Caco-2 (cell line): ENCODE measurements at regions of chr2 and their contacts with region 1.

Region 1: DNA sequence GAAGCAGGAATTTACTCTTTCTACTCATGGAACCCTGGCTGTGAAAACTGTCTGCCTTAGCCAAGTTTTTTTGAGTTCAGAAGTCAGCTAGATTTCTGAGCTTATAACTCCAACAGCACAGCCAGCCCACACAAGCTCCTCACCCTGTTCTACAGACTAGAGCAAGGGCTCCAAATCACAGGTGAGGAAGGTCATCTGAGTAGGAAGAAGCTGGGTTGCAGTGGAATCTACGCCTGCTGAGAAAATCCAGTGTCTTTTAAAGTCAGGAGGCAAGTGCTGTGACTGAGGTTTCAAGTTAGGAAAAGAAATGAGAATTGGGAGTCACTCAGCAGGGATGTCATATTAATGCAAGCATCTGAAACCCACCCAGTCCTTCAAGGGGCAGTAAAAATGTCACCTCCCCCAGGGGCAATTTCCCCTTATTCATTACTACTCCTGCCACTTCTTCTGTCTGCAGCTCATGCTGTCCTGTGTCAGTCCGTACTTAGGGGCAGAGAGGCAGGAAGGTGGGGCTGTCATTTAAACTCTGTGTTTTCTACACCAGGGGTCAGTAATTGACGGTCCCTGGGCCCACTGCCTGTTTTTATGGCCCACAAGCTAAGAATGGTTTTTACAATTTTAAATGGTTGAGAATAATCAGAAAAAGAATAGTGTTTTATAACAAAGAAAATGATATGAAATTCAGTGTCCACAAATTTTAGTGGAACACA is 551.1 kb downstream of the BCL11A start:
- DNase-seq: peak in 1 of 2 experiments; percentile 7
- H3K4me3 ChIP-seq: no peak overlapping the region
- H3K4me3 Mint-ChIP-seq: no peak overlapping the region
- H3K27ac Mint-ChIP-seq: no peak overlapping the region
- H3K4me1 ChIP-seq: no peaks in the 10 kb centered on the region
- H3K4me1 Mint-ChIP-seq: no peaks in the 10 kb centered on the region
- H3K27me3 ChIP-seq: no peaks in the 10 kb centered on the region
- H3K27me3 Mint-ChIP-seq: no peaks in the 10 kb centered on the region
- CTCF ChIP-seq: no peak

Region 2: DNA sequence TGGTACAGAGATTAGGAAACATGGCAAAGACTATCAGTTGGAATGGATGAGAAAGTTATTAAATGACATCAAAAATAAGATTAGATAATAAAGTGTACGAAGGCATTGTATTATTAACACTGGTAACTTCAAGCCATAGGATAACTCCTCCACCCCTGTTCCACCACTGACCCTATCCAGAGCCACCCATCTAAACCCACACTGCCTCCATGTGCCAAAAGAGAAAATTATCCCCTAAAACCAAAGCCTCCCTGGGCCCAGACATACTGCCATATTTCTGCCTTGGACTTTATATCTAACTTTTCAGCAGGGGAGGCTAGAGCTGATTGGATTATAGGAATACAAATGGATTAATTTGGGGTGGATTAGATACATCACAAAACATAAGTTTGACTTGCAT is 107.4 kb after region 1 on chr2:
- CTCF ChIA-PET with region 1: no interaction called
- POLR2A ChIA-PET with region 1: no interaction called
- intact Hi-C with region 1: loop called (anchors 2 kb)
- DNase-seq: no peak
- H3K4me3 ChIP-seq: no peak overlapping the region
- H3K4me3 Mint-ChIP-seq: no peak overlapping the region
- H3K27ac Mint-ChIP-seq: no peak overlapping the region
- H3K4me1 ChIP-seq: no peaks in the 10 kb centered on the region
- H3K4me1 Mint-ChIP-seq: peaks cover 17% of the 10 kb centered on the region
- H3K27me3 ChIP-seq: no peaks in the 10 kb centered on the region
- H3K27me3 Mint-ChIP-seq: no peaks in the 10 kb centered on the region
- CTCF ChIP-seq: no peak

Region 3: GRCh38 chr2:60119791-60120190 is 117.5 kb after region 1 on chr2:
- CTCF ChIA-PET with region 1: no interaction called
- POLR2A ChIA-PET with region 1: no interaction called
- intact Hi-C with region 1: loop called (anchors 2 kb)
- DNase-seq: no peak
- H3K4me3 ChIP-seq: no peak overlapping the region
- H3K4me3 Mint-ChIP-seq: no peak overlapping the region
- H3K27ac Mint-ChIP-seq: no peak overlapping the region
- H3K4me1 ChIP-seq: no peaks in the 10 kb centered on the region
- H3K4me1 Mint-ChIP-seq: peaks cover 2% of the 10 kb centered on the region
- H3K27me3 ChIP-seq: no peaks in the 10 kb centered on the region
- H3K27me3 Mint-ChIP-seq: no peaks in the 10 kb centered on the region
- CTCF ChIP-seq: no peak

Region 4: DNA sequence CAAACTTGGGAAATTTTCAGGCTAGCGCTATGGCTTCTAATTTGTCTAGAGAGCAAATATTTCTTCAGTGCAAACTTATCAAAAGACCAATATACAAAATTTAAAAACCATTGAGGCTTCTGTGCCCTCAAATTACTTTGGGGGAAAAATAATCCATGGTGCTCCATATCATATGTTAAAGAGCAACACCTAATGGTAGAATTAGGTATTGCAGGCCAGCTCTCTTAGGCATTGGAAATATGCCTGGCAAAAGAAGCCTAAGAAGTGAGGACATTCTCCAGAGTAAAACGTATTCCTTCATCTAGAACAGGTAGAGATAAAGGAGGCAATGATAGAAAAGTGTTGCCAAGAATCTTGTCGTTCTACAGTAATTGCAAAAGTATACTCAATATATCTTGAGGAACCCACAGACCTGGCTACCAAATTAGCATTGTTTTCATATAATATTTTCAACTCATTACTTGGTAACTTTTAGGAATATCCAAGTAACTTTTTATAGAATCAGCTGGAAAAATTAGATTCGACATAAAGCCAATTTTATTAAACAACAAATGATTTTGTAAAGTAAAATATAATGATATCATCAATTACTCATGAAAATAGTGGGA is 150.0 kb after region 1 on chr2:
- CTCF ChIA-PET with region 1: no interaction called
- POLR2A ChIA-PET with region 1: no interaction called
- intact Hi-C with region 1: loop called (anchors 1 kb)
- DNase-seq: peak in 1 of 2 experiments; percentile 45
- H3K4me3 ChIP-seq: no peak overlapping the region
- H3K4me3 Mint-ChIP-seq: no peak overlapping the region
- H3K27ac Mint-ChIP-seq: no peak overlapping the region
- H3K4me1 ChIP-seq: no peaks in the 10 kb centered on the region
- H3K4me1 Mint-ChIP-seq: no peaks in the 10 kb centered on the region
- H3K27me3 ChIP-seq: no peaks in the 10 kb centered on the region
- H3K27me3 Mint-ChIP-seq: no peaks in the 10 kb centered on the region
- CTCF ChIP-seq: peak; percentile 80 to 90

Region 5: DNA sequence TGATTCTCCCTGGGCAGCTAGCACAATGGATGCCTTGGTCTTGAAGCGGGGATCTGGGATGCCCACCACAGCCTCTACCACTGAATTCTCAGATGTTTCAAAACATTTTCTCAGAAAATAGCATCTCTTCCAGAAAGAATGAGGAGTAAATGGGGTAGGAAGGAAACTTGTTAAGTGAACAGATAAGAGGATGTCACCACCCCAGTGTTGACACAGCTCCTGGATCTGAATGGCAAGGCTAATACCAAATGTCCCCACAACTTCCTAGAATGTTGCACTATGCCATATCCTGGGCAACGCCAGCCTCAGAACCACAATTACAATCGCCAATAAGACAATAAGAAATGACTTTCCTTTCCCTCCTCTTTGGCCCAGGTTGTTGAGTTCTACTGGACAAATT is 373.9 kb after region 1 on chr2:
- CTCF ChIA-PET with region 1: no interaction called
- POLR2A ChIA-PET with region 1: no interaction called
- intact Hi-C with region 1: no loop called
- DNase-seq: no peak
- H3K4me3 ChIP-seq: no peak overlapping the region
- H3K4me3 Mint-ChIP-seq: no peak overlapping the region
- H3K27ac Mint-ChIP-seq: no peak overlapping the region
- H3K4me1 ChIP-seq: peaks cover 15% of the 10 kb centered on the region; the same call in 1 of the 2 replicates
- H3K4me1 Mint-ChIP-seq: no peaks in the 10 kb centered on the region
- H3K27me3 ChIP-seq: no peaks in the 10 kb centered on the region
- H3K27me3 Mint-ChIP-seq: no peaks in the 10 kb centered on the region
- CTCF ChIP-seq: no peak